ENCODE measurements at regions of chr4 and their contacts with region 1.

Region 1: GRCh38 chr4:103171006-103171405 is 27.1 kb downstream of the CENPE start:
- DNase-seq: no peak
- H3K4me3 ChIP-seq: no peak overlapping the region
- H3K27ac ChIP-seq: no peak overlapping the region
- H3K4me1 ChIP-seq: no peaks in the 10 kb centered on the region
- H3K27me3 ChIP-seq: no peaks in the 10 kb centered on the region
- CTCF ChIP-seq: no peak

Region 2: GRCh38 chr4:103996637-103997036 is 825.6 kb after region 1 on chr4:
- CTCF ChIA-PET with region 1: interaction called, 10 read pairs
- POLR2A ChIA-PET with region 1: no interaction called
- intact Hi-C with region 1: no loop called
- DNase-seq: peak; percentile 50
- H3K4me3 ChIP-seq: no peak overlapping the region
- H3K27ac ChIP-seq: no peak overlapping the region
- H3K4me1 ChIP-seq: no peaks in the 10 kb centered on the region
- H3K27me3 ChIP-seq: no peaks in the 10 kb centered on the region
- CTCF ChIP-seq: no peak